ENCODE measurements at regions of chr12 and their contacts with region 1.

Region 1: DNA sequence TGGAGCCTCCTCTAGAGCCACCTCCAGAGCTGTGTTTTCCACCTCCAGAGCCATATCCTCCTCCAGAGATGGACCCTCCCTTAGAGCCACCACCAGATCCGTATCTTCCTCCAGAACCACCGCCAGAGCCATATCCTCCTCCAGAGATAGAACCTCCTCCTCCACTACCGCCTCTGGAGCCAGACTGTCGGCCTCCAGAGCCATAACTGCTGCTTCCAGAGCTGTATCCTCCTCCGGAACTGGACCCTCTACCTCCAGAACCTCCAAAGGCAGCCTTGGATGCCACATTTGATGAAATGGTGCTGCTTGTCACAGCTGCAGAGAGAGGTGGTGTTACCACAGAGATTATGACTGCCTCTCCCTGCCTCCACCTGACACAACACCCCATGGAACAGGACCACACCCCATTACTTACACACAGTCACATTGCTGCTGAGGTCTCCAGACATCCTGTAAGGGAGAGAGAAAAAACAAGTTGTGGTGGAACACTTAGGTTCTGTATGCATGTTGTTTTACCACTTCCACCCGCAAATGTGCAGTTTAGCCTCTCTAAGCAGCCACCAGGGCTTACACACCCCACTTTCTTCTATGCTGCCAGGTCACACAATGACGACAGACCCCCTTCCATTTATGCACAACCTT is 6.8 kb downstream of the KRT2 start:
- DNase-seq: peak in 9 of 10 donors; percentile 44 to 96 (median 83)
- ATAC-seq: peak; percentile 92
- H3K4me3 Mint-ChIP-seq: peak overlapping the region; percentile 33 to 91 (median 81)
- H3K27ac Mint-ChIP-seq: peak overlapping the region; percentile 95 to 100 (median 100)
- H3K4me1 Mint-ChIP-seq: peaks cover 65 to 93% (median 91%) of the 10 kb centered on the region in 4 donors
- H3K27me3 Mint-ChIP-seq: no peaks in the 10 kb centered on the region

Region 2: DNA sequence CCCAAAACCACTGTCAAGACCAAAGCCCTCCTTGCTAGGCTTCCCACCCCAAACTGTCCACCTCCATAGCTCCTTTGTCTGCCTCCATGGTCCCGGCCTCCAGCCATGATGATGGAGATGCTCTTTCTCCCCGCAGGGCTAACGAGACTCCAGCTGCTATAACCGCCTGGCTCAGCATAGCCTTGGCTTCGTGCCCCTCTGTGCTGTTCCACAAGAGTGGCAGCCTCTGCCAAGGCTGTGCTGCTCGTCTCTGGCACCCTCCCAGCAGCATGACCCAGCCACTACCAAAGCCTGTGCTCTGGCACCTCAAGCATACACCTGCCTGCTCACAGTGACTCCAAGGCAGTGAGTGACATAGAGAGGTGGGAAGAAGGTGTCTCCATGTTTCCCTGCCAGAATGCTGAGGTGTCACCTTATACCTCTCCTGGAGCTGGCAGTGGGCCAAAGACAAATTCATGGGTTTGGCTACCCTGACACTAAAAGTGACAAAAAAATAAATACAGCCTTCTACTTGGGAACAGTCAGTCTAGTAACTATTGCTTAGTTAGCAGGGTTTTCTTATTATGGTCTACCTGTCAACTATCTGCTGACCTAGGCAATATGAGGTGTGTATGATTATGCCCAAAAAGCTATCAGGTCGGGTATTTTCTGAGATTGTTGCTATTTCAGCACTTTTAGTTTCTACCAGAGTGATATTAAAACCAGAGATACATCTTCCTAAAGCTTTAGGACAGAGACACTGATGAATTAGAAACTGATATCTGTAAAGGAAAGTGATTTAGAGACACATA is 10.8 kb before region 1 on chr12:
- POLR2A ChIA-PET with region 1: interaction called, 53 read pairs
- DNase-seq: no peak
- ATAC-seq: no peak
- H3K4me3 Mint-ChIP-seq: peak overlapping the region in 7 of 10 donors; percentile 18 to 54 (median 35)
- H3K27ac Mint-ChIP-seq: peak overlapping the region; percentile 45 to 98 (median 92)
- H3K4me1 Mint-ChIP-seq: peaks cover 42 to 68% (median 67%) of the 10 kb centered on the region in 4 donors
- H3K27me3 Mint-ChIP-seq: no peaks in the 10 kb centered on the region

Measured in naive thymus-derived CD8-positive, alpha-beta T cell (primary cell).